ENCODE measurements at regions of chr16 and their contacts with region 1.

Region 1: DNA sequence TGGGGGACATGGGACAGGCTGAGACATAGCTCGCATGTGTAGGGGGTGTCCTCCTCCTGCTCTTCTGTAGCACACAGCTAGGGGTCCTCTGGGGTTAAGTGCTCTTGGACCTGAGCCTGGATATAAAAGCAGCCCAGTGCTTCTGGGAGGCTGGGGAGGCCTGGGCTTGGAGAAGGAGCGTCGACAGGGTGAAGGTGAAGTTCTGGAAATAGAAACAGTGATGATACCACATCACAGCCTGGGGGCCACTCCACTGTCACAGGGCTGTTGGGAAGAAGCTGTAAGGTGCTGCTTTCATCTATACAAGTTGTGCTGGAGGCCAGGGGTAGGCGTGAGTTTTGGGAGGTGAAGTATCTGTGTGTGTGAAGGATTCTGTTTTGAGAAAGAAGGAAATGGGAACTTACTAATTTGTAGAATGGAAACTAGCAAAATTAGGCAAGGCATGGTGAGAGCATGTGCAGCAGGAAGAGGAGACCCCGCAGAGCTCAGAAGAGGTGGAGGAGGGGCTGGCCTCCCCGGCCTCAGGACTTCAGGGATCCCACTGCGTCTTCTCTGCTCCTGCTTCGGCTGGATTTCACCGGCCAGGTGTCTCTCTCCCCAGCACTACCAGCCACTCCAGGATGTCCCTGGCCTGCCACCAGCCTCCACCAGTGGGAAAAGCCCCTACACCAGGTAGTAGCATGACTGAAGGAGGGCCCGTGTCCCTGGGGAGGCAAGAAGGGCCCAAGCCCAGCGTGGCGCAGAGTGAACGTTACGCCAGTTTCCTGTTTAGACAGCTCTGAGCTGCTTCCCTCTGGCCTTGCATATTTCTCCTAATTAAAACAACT is 19.4 kb downstream of the PLCG2 start:
- DNase-seq: no peak
- ATAC-seq: peak in 3 of 4 donors; percentile 51 to 60 (median 56)
- H3K4me3 ChIP-seq: no peak overlapping the region
- H3K27ac ChIP-seq: peak overlapping the region in 1 of 12 donors; percentile 79
- H3K4me1 ChIP-seq: peaks cover 0 to 40% (median 6%) of the 10 kb centered on the region in 12 donors
- H3K27me3 ChIP-seq: no peaks in the 10 kb centered on the region
- CTCF ChIP-seq: no peak
- POLR2A ChIP-seq: no peak

Region 2: DNA sequence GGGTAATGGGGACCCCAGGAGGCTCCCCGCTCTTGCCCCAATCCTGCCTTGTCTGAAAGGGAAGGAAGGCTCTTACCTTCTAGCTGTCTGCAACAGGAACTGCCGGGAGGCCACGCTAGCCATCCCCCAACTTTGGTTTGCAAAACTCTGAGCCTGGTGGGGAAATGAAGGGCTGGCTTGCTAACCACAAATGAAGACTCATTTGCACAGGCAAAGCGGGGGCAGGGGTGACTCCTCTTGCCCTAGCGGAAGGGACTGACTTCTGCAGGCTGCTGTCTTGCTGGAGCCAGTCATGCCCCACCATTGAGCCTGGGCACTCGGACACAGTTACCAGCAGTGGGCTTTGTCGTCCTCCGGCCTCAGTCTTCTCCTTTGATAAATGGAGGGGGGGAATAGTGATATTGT is 33.2 kb after region 1 on chr16:
- intact Hi-C with region 1: no loop called
- DNase-seq: peak; percentile 36 to 77 (median 60)
- ATAC-seq: peak in 3 of 4 donors; percentile 59 to 80 (median 67)
- H3K4me3 ChIP-seq: peak overlapping the region in 1 of 12 donors; percentile 30
- H3K27ac ChIP-seq: peak overlapping the region in 1 of 12 donors; percentile 68
- H3K4me1 ChIP-seq: peaks cover 0 to 35% (median 0%) of the 10 kb centered on the region in 12 donors
- H3K27me3 ChIP-seq: peaks cover 0 to 3% (median 0%) of the 10 kb centered on the region in 9 donors
- CTCF ChIP-seq: no peak
- POLR2A ChIP-seq: no peak

Region 3: DNA sequence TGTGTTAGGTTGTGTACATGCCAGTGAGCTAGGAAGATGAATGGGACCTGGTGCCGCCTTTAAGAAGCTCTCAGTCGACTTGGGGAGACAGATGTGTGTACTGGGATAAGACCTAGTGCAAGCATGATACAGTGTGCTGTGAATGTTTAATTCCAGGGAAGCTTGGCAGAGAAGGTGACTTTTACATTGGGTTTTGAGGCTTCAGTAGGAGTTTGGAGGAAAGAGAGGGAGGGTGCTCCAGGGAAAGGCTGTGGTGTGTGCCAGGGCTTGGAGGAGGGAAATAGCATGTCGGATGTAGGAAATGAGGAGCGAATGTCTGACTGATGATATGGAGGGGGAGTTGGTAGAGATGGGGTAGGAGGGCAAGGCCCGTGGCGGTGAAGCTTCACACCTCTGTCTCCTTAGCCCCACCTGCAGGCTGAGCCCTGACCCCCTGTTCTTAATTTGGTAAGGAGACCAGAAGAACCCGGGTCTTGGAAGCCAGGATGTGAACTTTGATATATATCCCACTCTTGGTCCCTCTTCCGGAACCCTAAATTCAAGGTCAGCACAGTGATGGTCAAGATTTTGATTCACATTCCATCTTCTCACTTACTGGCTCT is 57.1 kb after region 1 on chr16:
- intact Hi-C with region 1: loop called in 1 of 10 experiments (anchors 10 kb)
- DNase-seq: no peak
- ATAC-seq: no peak
- H3K4me3 ChIP-seq: no peak overlapping the region
- H3K27ac ChIP-seq: no peak overlapping the region
- H3K4me1 ChIP-seq: peaks cover 0 to under 1% (median 0%) of the 10 kb centered on the region in 12 donors
- H3K27me3 ChIP-seq: no peaks in the 10 kb centered on the region
- CTCF ChIP-seq: no peak
- POLR2A ChIP-seq: no peak

Measured in heart left ventricle (tissue), 16 donors.